Left ventricle myocardium superior (tissue), 1 donor: ENCODE measurements at regions of chr19 and their contacts with region 1.

Region 1: DNA sequence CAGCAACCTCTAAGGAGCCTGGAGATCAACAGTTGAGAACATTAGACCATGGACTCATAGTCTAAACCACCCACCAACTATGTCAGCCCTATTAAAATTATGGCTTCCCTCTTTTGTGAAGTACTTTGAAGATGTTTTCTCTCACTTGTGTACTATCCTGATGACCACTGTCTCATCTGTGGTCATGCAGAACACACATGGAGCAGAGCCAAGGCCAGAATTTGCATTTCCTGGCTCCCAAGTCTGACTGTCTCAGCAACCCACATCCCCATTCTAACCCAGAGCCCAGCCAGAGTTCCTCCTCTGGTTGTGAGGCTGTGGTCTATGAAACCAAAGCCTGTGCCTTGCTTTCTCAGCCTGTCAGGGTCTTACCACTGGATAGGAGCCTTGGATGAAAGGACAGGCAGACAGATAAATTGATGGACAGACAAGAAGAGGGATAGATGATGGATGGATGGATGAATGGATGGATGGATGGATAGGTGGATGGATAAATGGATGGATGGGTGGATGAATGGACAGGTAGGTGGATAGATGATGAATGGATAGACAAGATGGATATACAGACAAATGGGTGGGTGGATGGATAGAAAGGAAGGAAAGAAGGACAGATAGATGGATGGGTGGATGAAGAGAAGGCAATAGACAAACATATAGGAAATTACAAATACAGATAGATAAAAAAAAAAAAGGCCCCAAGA is 35.4 kb downstream of the ZNF557 start:
- DNase-seq: no peak
- ATAC-seq: no peak

Region 2: GRCh38 chr19:6887316-6887715 is 217.6 kb before region 1 on chr19 and contains the start of gene ADGRE1:
- intact Hi-C with region 1: no loop called
- DNase-seq: peak; percentile 31
- ATAC-seq: peak; percentile 31
- total RNA-seq, gene ADGRE1: 0.30 TPM

Region 3: DNA sequence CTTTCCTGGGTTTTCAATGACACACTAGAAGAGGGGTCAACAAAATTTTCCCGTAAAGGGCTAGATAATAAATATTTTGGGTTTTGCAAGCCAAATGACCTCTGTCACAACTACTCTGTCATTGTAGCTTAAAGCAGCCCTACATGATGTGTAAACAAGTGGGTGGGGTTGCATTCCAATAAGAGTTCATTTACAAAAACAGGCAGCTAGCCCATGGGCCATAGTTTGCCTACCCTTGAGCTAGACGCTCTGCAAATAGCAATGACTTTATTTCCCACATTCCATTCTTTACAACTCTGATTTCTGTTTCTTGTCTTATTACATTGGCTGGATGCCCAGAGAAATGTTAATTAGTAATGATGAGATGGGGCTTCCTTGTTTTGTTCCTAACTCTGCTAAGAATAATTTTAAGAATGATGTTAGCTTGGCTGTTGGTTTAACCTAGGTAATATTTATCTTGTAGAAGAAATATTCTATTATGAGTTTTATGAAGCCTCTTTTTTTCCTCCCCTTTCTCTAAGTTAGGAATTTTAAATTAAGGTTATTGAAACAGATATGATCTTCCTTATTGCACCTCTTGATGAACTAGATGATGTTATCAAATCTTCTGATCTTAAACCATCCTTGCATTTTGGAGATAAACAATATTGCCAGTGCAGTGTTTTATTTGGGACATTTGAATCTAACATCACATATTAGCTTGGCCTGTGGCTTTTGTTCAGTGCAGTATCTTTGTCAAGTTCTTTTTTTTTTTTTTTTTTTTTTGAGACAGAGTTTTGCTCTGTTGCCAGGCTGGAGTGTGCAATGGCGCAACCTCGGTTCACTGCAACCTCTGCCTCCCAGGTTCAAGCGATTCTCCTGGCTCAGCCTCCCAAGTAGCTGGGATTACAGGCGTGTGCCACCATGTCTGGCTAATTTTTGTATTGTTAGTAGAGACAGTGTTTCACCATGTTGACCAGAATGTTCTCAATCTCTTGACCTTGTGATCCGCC is 40.9 kb after region 1 on chr19:
- intact Hi-C with region 1: no loop called
- DNase-seq: no peak
- ATAC-seq: no peak

Region 4: DNA sequence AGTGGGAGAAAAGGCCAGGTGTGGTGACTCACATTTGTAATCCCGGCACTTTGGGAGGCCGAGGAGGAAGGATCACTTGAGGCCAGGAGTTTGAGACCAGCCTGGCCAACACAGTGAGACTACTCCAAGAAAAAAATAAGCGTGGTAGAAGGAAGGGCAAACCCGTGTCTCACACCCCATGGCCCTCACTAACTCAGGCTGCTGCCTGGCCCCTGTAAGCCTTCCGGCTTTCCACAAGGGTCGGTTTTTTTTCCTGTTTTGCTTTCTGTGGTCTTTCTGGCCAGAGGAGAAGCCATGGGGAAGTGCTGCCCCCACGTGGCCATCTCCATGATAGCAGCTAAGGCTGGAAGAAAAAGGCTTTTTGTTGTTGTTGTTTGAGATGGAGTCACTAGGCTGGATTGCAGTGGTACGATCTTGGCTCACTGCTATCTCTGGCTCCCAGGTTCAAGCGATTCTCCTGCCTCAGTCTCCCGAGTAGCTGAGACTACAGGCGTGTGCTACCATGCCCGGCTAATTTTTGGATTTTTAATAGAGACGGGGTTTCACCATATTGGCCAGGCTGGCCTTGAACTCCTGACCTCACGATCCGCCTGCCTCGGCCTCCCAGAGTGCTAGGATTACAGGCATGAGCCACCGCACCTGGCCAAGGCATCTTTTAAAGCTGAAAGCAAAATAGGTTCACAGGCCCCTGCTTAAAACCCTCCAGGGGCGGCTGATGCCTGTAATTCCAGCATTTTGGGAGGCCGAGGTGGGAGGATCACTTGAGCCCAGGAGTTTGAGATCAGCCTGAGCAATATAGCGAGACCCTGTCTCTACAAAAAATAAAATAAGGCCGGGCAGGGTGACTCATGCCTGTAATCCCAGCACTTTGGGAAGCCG is 236.3 kb after region 1 on chr19:
- intact Hi-C with region 1: loop called (anchors 5 kb)
- DNase-seq: peak; percentile 88
- ATAC-seq: peak; percentile 42